Naive thymus-derived CD4-positive, alpha-beta T cell (primary cell): ENCODE measurements at regions of chr20 and their contacts with region 1.

Region 1: DNA sequence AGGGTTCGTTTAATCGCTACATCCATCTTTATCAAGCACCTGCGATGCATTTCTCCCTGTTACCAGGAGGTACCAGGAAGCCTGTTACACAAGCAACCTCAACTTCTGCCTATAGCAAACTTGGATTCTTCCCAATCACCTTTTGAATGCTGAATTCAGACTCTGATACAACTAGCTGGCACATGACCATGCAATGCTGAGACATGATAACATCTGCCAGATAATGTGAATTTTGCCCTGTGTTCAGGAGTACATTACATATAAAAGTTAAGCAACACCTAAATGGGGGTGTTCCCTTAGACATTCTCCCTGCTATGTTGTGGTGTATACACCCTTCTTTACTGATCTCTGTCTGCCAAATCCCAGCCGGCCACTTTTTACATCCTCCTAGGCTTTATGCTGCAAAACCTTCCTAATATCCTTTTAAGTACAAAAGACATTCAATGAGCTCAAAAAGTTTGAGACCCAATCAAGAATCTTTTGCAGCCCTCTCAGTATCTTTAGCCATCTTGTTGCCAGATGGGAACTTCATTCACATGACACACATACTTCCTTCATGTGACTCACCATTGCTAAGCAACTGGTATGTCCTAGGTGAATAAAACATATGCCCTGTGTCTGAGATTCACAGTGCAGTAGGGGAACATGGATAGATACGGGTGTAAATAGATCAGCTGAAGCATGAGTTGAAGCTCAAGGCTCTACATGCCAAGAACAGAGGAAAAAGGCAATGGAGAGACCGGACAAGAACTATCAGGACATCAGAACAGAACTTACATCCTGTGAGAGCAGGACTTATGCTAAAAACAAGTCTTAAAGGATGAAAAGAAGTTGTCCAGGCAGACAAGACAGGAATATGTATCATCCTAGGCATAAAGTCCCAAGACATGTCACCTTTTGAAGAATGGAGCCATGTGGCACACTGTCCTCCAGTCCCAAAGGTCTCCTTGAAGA is 84.3 kb downstream of the ZHX3 start:
- DNase-seq: no peak
- ATAC-seq: no peak
- H3K4me3 ChIP-seq: no peak overlapping the region
- H3K4me3 Mint-ChIP-seq: peak overlapping the region in 5 of 10 donors; percentile 9 to 55 (median 15)
- H3K27ac ChIP-seq: no peak overlapping the region
- H3K27ac Mint-ChIP-seq: peak overlapping the region in 2 of 9 donors; percentile 1 to 28
- H3K4me1 ChIP-seq: peaks cover 0 to 7% of the 10 kb centered on the region in 2 donors
- H3K4me1 Mint-ChIP-seq: peaks cover 16 to 31% (median 20%) of the 10 kb centered on the region in 7 donors
- H3K27me3 ChIP-seq: no peaks in the 10 kb centered on the region
- H3K27me3 Mint-ChIP-seq: no peaks in the 10 kb centered on the region

Region 2: GRCh38 chr20:41095110-41095969 is 137.9 kb before region 1 on chr20:
- CTCF ChIA-PET with region 1: interaction called, 6 read pairs
- POLR2A ChIA-PET with region 1: no interaction called
- intact Hi-C with region 1: loop called in 1 of 2 experiments (anchors 1 kb)
- DNase-seq: peak; percentile 27 to 63 (median 54)
- ATAC-seq: peak; percentile 85
- H3K4me3 ChIP-seq: no peak overlapping the region
- H3K4me3 Mint-ChIP-seq: no peak overlapping the region
- H3K27ac ChIP-seq: no peak overlapping the region
- H3K27ac Mint-ChIP-seq: peak overlapping the region in 4 of 9 donors; percentile 31 to 77 (median 52)
- H3K4me1 ChIP-seq: no peaks in the 10 kb centered on the region
- H3K4me1 Mint-ChIP-seq: peaks cover 0 to 11% (median 4%) of the 10 kb centered on the region in 7 donors
- H3K27me3 ChIP-seq: no peaks in the 10 kb centered on the region
- H3K27me3 Mint-ChIP-seq: no peaks in the 10 kb centered on the region

Region 3: DNA sequence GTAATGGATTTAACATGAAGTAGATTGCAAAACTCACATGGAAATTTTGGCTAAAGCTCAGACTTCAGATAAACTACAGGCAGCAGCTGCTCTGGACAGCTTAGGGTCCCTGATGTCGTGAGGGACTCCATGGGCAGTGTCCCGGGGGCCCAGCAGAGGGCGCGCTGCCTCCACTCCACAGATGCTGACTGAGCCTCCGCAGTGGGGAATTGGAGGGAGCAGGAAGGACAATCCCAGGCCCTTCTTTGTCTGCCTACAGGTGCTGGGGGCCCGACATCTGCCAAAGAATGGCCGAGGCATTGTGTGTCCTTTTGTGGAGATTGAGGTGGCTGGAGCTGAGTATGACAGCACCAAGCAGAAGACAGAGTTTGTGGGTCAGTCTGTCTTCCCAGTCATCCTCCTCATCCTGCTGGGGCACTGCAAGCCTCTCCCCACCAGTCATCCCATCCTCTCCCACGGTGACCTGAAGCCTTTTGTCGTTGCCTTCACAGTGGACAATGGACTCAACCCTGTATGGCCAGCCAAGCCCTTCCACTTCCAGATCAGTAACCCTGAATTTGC is 60.0 kb before region 1 on chr20:
- CTCF ChIA-PET with region 1: interaction called, 18 read pairs
- POLR2A ChIA-PET with region 1: interaction called, 3 read pairs
- intact Hi-C with region 1: loop called (anchors 1 kb)
- DNase-seq: peak; percentile 34 to 72 (median 56)
- ATAC-seq: peak; percentile 88
- H3K4me3 ChIP-seq: no peak overlapping the region
- H3K4me3 Mint-ChIP-seq: no peak overlapping the region
- H3K27ac ChIP-seq: no peak overlapping the region
- H3K27ac Mint-ChIP-seq: peak overlapping the region in 7 of 9 donors; percentile 49 to 88 (median 79)
- H3K4me1 ChIP-seq: no peaks in the 10 kb centered on the region
- H3K4me1 Mint-ChIP-seq: peaks cover 8 to 36% (median 21%) of the 10 kb centered on the region in 7 donors
- H3K27me3 ChIP-seq: no peaks in the 10 kb centered on the region
- H3K27me3 Mint-ChIP-seq: no peaks in the 10 kb centered on the region

Region 4: DNA sequence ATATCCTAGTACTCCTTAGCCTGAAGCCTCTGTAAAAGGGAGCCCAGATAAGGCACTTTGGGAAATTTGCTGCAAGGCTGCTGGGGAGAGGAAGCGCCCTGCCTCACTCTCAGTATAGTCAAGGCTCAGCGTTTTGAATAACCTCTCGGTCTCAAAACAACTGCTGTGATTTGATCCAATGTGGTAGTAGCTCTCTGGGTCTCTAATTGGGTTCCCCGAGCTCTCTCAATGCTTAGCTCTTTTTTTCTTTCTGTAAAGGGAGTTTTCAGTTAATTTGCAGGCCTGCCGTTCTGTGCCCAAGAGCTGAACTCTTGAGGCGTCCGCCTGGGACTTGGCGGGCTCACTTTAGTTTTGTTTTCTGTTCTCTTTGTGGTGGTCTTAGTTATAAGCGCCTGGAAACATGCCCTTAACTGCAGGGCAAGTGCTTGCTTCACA is 43.1 kb after region 1 on chr20:
- CTCF ChIA-PET with region 1: no interaction called
- POLR2A ChIA-PET with region 1: no interaction called
- intact Hi-C with region 1: no loop called
- DNase-seq: no peak
- ATAC-seq: no peak
- H3K4me3 ChIP-seq: no peak overlapping the region
- H3K4me3 Mint-ChIP-seq: no peak overlapping the region
- H3K27ac ChIP-seq: no peak overlapping the region
- H3K27ac Mint-ChIP-seq: no peak overlapping the region
- H3K4me1 ChIP-seq: no peaks in the 10 kb centered on the region
- H3K4me1 Mint-ChIP-seq: peaks cover 0 to 4% (median 0%) of the 10 kb centered on the region in 7 donors
- H3K27me3 ChIP-seq: no peaks in the 10 kb centered on the region
- H3K27me3 Mint-ChIP-seq: peaks cover 0 to 2% (median 0%) of the 10 kb centered on the region in 5 donors

Region 5: DNA sequence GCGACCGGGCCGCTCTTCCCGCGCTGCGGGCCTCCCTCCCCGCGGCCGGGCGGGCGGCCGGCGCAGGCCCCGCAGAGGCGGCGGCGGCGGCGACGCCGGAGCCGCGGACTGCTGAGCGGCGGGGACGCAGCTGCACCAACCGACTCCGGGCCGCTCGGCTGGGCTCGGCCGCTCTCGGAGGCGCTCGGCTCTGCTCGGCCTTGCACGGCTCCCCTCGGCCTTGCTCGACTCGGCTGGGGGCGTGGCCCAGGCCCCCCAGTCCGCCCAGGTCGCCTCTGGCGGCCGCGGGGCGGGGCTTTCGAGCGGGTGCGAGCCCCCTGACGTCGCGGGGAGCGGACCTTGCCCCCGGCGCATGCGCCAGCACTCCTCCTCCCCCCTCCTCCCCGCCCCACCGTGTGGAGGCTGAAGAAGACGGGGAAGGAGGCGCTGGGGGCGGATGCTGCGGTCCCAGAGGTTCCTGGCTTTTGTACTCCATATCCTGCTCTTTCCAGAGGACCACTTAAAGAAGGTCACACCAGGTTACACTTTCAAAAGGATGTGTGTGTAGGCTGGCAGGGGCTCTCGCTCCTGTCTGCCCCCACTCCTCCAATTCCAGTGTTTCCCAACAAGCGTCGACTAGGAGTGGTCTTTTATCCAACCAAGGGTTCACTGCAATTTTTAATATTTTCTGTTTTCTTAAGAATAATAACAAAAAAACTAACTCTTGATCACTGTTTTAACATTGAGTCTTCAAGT is 84.5 kb after region 1 on chr20 and contains the start of gene ZHX3:
- CTCF ChIA-PET with region 1: no interaction called
- POLR2A ChIA-PET with region 1: no interaction called
- intact Hi-C with region 1: loop called (anchors 1 to 5 kb)
- DNase-seq: peak; percentile 90 to 97 (median 95)
- ATAC-seq: peak; percentile 99
- H3K4me3 ChIP-seq: peak within 1 kb of the TSS; percentile 47
- H3K4me3 Mint-ChIP-seq: peak within 1 kb of the TSS; percentile 74 to 92 (median 84)
- H3K27ac ChIP-seq: peak within 1 kb of the TSS; percentile 75
- H3K27ac Mint-ChIP-seq: peak within 1 kb of the TSS; percentile 48 to 87 (median 84)
- H3K4me1 ChIP-seq: no peaks in the 10 kb centered on the region
- H3K4me1 Mint-ChIP-seq: peaks cover 11 to 34% (median 28%) of the 10 kb centered on the region in 7 donors
- H3K27me3 ChIP-seq: no peaks in the 10 kb centered on the region
- H3K27me3 Mint-ChIP-seq: peaks cover 0 to 7% (median 0%) of the 10 kb centered on the region in 5 donors
- total RNA-seq, gene ZHX3: 7.9 to 12.8 (median 9.8) TPM

Region 6: DNA sequence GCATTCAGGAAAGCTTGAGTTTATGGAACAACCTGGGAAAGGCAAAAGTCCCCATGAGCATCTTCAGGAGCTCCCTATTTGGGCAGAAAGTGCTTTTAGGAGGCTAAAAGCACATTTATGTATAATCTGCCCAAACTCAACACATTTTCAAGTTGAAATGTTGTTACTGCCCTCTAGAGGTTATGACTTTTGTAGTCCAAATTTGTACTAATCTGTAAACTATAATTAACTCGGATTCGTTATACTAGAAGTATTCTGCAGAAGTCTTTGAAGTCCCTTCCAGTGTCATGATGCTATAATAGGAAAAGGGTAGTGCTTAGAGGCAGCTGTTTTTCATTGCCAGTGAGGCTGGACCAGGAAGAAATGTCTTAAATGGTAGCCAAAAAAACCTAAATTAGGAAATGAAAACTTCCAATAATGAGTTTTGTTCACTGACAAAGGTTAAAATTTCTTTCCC is 178.2 kb after region 1 on chr20:
- CTCF ChIA-PET with region 1: no interaction called
- POLR2A ChIA-PET with region 1: no interaction called
- intact Hi-C with region 1: loop called in 1 of 2 experiments (anchors 10 kb)
- DNase-seq: no peak
- ATAC-seq: peak; percentile 38
- H3K4me3 ChIP-seq: no peak overlapping the region
- H3K4me3 Mint-ChIP-seq: no peak overlapping the region
- H3K27ac ChIP-seq: no peak overlapping the region
- H3K27ac Mint-ChIP-seq: peak overlapping the region in 3 of 9 donors; percentile 19 to 78 (median 43)
- H3K4me1 ChIP-seq: peaks cover 3 to 7% of the 10 kb centered on the region in 2 donors
- H3K4me1 Mint-ChIP-seq: peaks cover 20 to 43% (median 26%) of the 10 kb centered on the region in 7 donors
- H3K27me3 ChIP-seq: no peaks in the 10 kb centered on the region
- H3K27me3 Mint-ChIP-seq: no peaks in the 10 kb centered on the region

Region 7: GRCh38 chr20:41701588-41702348 is 468.5 kb after region 1 on chr20:
- CTCF ChIA-PET with region 1: no interaction called
- POLR2A ChIA-PET with region 1: no interaction called
- intact Hi-C with region 1: no loop called
- DNase-seq: no peak
- ATAC-seq: no peak
- H3K4me3 ChIP-seq: no peak overlapping the region
- H3K4me3 Mint-ChIP-seq: no peak overlapping the region
- H3K27ac ChIP-seq: no peak overlapping the region
- H3K27ac Mint-ChIP-seq: peak overlapping the region in 1 of 9 donors; percentile 18
- H3K4me1 ChIP-seq: no peaks in the 10 kb centered on the region
- H3K4me1 Mint-ChIP-seq: peaks cover 2 to 8% (median 4%) of the 10 kb centered on the region in 7 donors
- H3K27me3 ChIP-seq: no peaks in the 10 kb centered on the region
- H3K27me3 Mint-ChIP-seq: peaks cover 5 to 14% (median 7%) of the 10 kb centered on the region in 5 donors